Activated B cell treated with CpG ODN at 0.5 μM for 24 hours (primary cell): ENCODE measurements at regions of chr20 and their contacts with region 1.

Region 1: GRCh38 chr20:32357869-32358631 is at the start of gene ASXL1:
- DNase-seq: peak; percentile 94
- ATAC-seq: peak; percentile 81
- H3K4me3 Mint-ChIP-seq: peak within 1 kb of the TSS; percentile 98
- H3K27ac Mint-ChIP-seq: peak within 1 kb of the TSS; percentile 100
- H3K4me1 Mint-ChIP-seq: peaks cover 76% of the 10 kb centered on the region
- H3K27me3 Mint-ChIP-seq: no peaks in the 10 kb centered on the region
- CTCF ChIP-seq: no peak
- total RNA-seq, gene ASXL1: 145 and 169 TPM in 2 replicates

Region 2: GRCh38 chr20:32109392-32110172 is 248.5 kb before region 1 on chr20 and contains the start of gene TM9SF4:
- CTCF ChIA-PET with region 1: no interaction called
- POLR2A ChIA-PET with region 1: interaction called, 6 read pairs
- intact Hi-C with region 1: loop called (anchors 1 kb)
- DNase-seq: peak; percentile 86
- ATAC-seq: peak; percentile 88
- H3K4me3 Mint-ChIP-seq: peak within 1 kb of the TSS; percentile 97
- H3K27ac Mint-ChIP-seq: peak within 1 kb of the TSS; percentile 100
- H3K4me1 Mint-ChIP-seq: peaks cover 33% of the 10 kb centered on the region
- H3K27me3 Mint-ChIP-seq: no peaks in the 10 kb centered on the region
- CTCF ChIP-seq: no peak
- total RNA-seq, gene TM9SF4: 41.9 and 48.1 TPM in 2 replicates

Region 3: GRCh38 chr20:32277361-32278198 is 80.5 kb before region 1 on chr20 and contains the start of gene KIF3B:
- CTCF ChIA-PET with region 1: no interaction called
- POLR2A ChIA-PET with region 1: interaction called, 10 read pairs
- intact Hi-C with region 1: loop called (anchors 2 kb)
- DNase-seq: peak; percentile 80
- ATAC-seq: peak; percentile 68
- H3K4me3 Mint-ChIP-seq: peak within 1 kb of the TSS; percentile 92
- H3K27ac Mint-ChIP-seq: peak within 1 kb of the TSS; percentile 94
- H3K4me1 Mint-ChIP-seq: peaks cover 56% of the 10 kb centered on the region
- H3K27me3 Mint-ChIP-seq: peaks cover 3% of the 10 kb centered on the region
- CTCF ChIP-seq: no peak
- total RNA-seq, gene KIF3B: 25.9 and 28.4 TPM in 2 replicates

Region 4: GRCh38 chr20:32336918-32337347 is 21.1 kb before region 1 on chr20:
- CTCF ChIA-PET with region 1: interaction called, 9 read pairs
- POLR2A ChIA-PET with region 1: interaction called, 40 read pairs
- intact Hi-C with region 1: loop called (anchors 1 kb)
- DNase-seq: no peak
- ATAC-seq: peak; percentile 64
- H3K4me3 Mint-ChIP-seq: no peak overlapping the region
- H3K27ac Mint-ChIP-seq: peak overlapping the region; percentile 66
- H3K4me1 Mint-ChIP-seq: peaks cover 47% of the 10 kb centered on the region
- H3K27me3 Mint-ChIP-seq: no peaks in the 10 kb centered on the region
- CTCF ChIP-seq: peak; percentile 55

Region 5: DNA sequence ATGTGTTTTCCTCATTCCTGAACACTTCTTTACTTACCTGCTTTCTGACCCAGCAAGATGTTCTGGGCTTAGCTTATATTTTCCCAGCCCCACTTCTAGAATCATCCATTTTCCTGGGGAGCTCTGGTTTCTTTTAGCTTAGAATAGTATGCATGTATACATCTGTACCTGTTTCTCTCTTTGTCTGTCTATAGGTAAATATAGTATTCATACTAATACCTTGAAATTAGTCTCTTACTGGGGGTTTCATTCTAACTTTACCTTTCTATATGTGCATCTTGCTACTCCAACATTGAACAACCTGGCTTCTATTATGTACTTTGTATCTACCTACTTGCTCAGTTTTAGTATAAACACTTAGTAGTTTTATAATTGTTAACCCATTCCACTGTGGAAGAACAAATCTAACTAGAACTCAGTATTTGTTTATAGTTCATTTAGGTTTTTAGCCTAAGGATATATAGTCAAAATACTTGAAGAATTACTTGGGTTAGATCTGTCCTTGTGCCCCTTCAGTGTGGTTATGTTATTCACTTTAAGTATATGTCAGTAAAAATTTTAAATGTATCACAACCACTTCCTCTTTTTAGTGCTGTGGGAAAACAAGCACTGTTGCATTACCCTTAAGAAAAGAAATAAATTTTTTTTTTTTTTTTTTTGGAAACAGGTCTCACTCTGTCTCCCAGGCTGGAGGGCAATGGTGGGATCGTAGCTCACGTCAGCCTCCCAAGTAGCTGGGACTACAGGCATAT is 54.1 kb after region 1 on chr20:
- CTCF ChIA-PET with region 1: no interaction called
- POLR2A ChIA-PET with region 1: interaction called, 5 read pairs
- intact Hi-C with region 1: loop called (anchors 2 kb)
- DNase-seq: no peak
- ATAC-seq: peak; percentile 80
- H3K4me3 Mint-ChIP-seq: peak overlapping the region; percentile 57
- H3K27ac Mint-ChIP-seq: peak overlapping the region; percentile 42
- H3K4me1 Mint-ChIP-seq: peaks cover 57% of the 10 kb centered on the region
- H3K27me3 Mint-ChIP-seq: no peaks in the 10 kb centered on the region
- CTCF ChIP-seq: no peak

Region 6: DNA sequence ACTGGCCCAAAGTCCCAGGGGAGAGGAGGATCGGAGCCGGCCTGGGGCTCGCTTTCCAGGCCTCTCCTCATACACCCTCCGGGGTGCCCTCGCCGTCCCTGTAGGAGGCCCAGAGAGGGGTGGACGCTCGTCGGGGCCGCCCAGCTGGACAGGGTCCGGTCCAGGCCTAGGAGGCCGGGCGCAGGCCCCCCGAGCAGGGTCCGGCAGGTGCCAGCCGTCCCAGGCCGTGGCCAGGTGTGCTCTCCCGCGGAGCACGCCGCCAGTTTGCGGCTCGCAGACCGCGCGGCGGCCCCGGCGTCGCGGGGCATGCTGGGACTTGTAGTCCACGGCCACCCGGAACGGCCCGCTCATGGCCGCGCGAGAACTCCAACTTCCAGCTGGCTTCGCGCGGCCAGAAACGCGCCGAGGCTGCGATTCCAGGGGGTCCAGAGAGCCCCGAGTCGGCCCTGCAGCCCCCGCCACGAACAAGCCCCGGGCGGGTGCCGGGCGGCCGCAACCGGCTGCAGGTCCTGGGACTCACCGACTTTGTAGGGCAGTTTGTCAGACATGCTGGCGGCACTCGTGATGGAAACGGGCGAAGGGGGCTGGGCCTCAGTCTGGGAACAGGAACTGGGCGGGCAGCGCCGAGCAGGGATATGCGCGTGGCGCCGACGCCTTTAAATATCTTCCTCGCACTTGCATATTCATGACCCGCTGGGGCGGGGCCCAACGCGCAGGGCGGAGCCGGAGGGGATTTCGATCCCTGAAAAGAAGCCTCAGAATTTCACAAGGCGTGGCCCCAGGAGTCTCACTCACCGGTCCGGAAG is 1944.9 kb after region 1 on chr20 and contains the start of gene AHCY:
- CTCF ChIA-PET with region 1: no interaction called
- POLR2A ChIA-PET with region 1: no interaction called
- intact Hi-C with region 1: loop called (anchors 5 kb)
- DNase-seq: peak; percentile 90
- ATAC-seq: peak; percentile 91
- H3K4me3 Mint-ChIP-seq: peak within 1 kb of the TSS; percentile 94
- H3K27ac Mint-ChIP-seq: peak within 1 kb of the TSS; percentile 93
- H3K4me1 Mint-ChIP-seq: peaks cover 22% of the 10 kb centered on the region
- H3K27me3 Mint-ChIP-seq: no peaks in the 10 kb centered on the region
- CTCF ChIP-seq: no peak
- total RNA-seq, gene AHCY: 77.9 and 83.5 TPM in 2 replicates